Activated B cell treated with CpG ODN at 0.5 μM for 24 hours (primary cell): ENCODE measurements at regions of chr2 and their contacts with region 1.

Region 1: DNA sequence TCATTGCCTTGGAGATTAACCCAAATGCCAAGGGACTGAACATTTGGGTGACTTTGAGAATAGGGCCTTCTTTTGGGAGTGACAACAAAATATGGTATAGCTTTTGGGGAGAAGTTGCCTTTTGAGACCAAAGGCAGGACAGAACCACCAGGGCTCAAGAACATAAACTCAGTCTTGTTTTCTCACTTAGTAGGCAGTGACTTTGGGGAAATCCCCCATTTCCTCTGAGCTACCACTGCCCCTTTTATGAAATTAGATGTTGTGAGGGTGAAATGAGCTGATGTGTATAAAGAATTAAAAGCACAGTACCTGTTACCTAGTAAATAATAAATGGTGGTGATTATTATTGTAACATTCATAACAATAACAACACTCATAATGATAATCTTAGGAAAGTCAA is 36.5 kb downstream of the GPD2 start:
- DNase-seq: no peak
- ATAC-seq: peak; percentile 76
- H3K4me3 Mint-ChIP-seq: no peak overlapping the region
- H3K27ac Mint-ChIP-seq: no peak overlapping the region
- H3K4me1 Mint-ChIP-seq: peaks cover 45% of the 10 kb centered on the region
- H3K27me3 Mint-ChIP-seq: no peaks in the 10 kb centered on the region
- CTCF ChIP-seq: no peak

Region 2: DNA sequence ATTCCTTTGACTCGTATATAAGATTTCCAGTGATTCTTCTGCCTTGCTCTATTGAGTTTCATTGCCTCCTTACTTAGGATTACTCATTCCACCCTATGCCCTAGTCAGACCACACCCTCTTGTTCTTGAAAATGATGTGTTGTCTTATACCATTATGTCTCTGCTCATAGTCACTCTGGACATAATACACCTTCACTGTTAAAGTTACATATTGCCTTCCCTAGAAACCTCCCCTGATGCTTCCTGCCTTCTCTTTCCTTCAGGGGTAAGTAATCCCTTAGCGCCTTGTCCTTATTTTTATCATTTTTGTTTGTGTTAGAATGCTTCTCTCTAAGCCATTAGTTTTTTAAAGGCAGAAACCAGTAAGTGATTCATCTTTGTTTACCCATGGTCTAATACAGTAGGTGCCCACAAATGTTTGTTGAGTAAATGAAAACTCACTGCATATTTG is 17.2 kb before region 1 on chr2:
- CTCF ChIA-PET with region 1: no interaction called
- POLR2A ChIA-PET with region 1: no interaction called
- intact Hi-C with region 1: loop called (anchors 2 kb)
- DNase-seq: no peak
- ATAC-seq: no peak
- H3K4me3 Mint-ChIP-seq: no peak overlapping the region
- H3K27ac Mint-ChIP-seq: no peak overlapping the region
- H3K4me1 Mint-ChIP-seq: peaks cover 42% of the 10 kb centered on the region
- H3K27me3 Mint-ChIP-seq: no peaks in the 10 kb centered on the region
- CTCF ChIP-seq: no peak

Region 3: DNA sequence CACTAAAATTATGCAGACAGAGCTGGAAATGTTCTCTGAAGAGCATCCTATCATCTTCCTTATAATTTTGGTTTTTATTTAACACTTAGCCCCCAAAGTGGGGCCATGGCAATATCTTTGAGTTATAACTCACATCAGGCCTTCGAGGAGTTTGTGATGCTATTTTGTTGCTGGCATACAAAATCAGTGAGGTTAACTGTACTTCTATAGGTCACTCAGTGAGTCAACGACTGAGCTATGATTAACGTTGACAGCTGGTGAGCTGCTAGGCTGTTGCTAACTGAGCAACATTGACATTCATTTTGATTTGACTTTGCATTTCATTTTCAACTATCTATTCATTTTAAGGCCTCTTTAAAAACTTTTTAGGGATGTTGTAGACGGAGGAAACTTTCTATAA is 13.5 kb after region 1 on chr2:
- CTCF ChIA-PET with region 1: no interaction called
- POLR2A ChIA-PET with region 1: no interaction called
- intact Hi-C with region 1: loop called (anchors 2 kb)
- DNase-seq: no peak
- ATAC-seq: no peak
- H3K4me3 Mint-ChIP-seq: no peak overlapping the region
- H3K27ac Mint-ChIP-seq: no peak overlapping the region
- H3K4me1 Mint-ChIP-seq: peaks cover 20% of the 10 kb centered on the region
- H3K27me3 Mint-ChIP-seq: no peaks in the 10 kb centered on the region
- CTCF ChIP-seq: no peak